ENCODE measurements at regions of chr7 and their contacts with region 1.

Region 1: DNA sequence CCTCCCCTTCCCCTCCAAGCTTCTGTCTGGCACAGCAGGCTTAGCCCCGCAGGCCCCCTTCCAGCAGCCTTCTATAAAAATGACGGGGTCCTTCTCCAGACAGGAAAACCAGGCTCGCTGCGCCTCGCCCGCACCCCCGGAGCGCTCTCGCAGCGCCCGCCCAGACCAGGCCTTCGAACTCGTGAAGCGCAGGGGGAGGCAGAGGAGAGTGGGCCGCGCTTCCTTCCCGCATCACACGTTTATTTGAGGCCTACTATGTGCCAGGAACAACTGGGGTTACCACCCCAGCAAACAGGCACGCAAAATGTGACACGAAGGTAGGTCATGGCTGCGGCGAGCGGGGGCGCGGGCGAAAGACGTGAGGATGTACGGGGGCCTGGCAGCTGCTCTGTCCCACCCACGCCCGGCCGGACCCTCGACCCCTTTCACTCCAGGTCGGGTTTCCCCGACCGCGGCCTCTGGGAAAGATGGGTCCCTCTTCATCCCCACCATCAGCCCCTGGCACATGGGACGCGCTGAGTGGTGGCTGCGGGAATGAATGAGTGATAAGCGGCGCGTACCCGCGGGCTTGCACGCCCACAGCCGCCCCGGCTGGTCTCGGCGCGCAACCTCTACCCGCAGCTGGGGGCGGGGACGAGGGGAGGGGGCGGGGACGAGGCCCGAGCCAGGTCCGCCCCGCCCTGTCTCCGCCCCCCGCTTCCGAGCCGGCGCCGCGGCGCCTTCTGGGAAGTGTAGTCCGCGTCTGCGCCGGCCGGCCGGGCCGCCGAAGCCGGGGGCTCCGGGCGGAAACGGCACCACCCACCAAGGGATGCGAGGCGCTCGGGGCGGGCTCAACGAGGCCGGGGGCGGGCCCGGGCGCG is 59.1 kb downstream of the ZNF467 start:
- DNase-seq: peak; percentile 88
- ATAC-seq: peak; percentile 91
- H3K4me3 Mint-ChIP-seq: peak overlapping the region; percentile 83
- H3K27ac Mint-ChIP-seq: no peak overlapping the region
- H3K4me1 Mint-ChIP-seq: peaks cover 17% of the 10 kb centered on the region
- H3K27me3 Mint-ChIP-seq: no peaks in the 10 kb centered on the region
- CTCF ChIP-seq: no peak

Region 2: DNA sequence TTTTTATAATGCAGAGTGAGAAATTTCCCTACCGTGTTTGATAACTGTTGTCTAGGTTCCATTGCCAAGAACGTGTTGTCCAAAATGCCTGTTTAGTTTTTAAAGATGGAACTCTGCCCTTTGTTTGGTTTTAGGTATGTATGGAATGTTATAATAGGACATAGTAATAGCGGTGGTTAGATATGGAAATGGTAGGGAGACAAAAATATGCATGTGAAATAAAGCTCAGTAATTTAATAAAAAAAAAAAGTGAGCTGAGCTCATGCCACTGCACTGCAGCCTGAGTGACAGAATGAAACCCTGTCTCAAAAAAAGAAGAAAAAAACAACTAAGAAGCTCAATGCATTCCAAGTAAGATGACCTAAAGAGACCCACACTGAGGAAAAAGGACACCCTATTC is 379.4 kb before region 1 on chr7:
- CTCF ChIA-PET with region 1: no interaction called
- POLR2A ChIA-PET with region 1: no interaction called
- intact Hi-C with region 1: no loop called
- DNase-seq: no peak
- ATAC-seq: no peak
- H3K4me3 Mint-ChIP-seq: no peak overlapping the region
- H3K27ac Mint-ChIP-seq: no peak overlapping the region
- H3K4me1 Mint-ChIP-seq: no peaks in the 10 kb centered on the region
- H3K27me3 Mint-ChIP-seq: peaks cover 13% of the 10 kb centered on the region
- CTCF ChIP-seq: no peak

Region 3: DNA sequence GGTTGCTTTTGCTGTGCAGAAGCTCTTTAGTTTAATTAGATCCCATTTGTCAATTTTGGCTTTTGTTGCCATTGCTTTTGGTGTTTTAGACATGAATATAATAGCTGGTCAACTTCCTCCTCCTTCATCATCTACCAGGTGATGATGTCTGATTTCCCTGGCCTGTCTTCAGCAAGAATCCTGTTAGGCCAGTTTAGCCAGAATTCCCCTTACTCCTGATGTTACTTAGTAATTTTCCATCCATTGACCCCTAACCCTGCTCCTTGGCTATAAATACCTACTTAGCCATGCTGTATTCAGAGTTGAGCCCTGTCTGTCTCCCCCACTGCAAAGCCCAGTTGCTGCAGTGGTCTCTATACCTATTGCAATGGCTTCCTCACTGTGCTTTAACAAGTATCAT is 344.8 kb before region 1 on chr7:
- CTCF ChIA-PET with region 1: no interaction called
- POLR2A ChIA-PET with region 1: no interaction called
- intact Hi-C with region 1: no loop called
- DNase-seq: no peak
- ATAC-seq: no peak
- H3K4me3 Mint-ChIP-seq: no peak overlapping the region
- H3K27ac Mint-ChIP-seq: no peak overlapping the region
- H3K4me1 Mint-ChIP-seq: no peaks in the 10 kb centered on the region
- H3K27me3 Mint-ChIP-seq: peaks cover 21% of the 10 kb centered on the region
- CTCF ChIP-seq: no peak

Region 4: GRCh38 chr7:149742075-149742701 is 27.9 kb after region 1 on chr7:
- CTCF ChIA-PET with region 1: interaction called, 8 read pairs
- POLR2A ChIA-PET with region 1: no interaction called
- intact Hi-C with region 1: loop called (anchors 2 kb)
- DNase-seq: peak; percentile 58
- ATAC-seq: peak; percentile 89
- H3K4me3 Mint-ChIP-seq: peak overlapping the region; percentile 76
- H3K27ac Mint-ChIP-seq: no peak overlapping the region
- H3K4me1 Mint-ChIP-seq: peaks cover 10% of the 10 kb centered on the region
- H3K27me3 Mint-ChIP-seq: peaks cover 26% of the 10 kb centered on the region
- CTCF ChIP-seq: peak; percentile 64

Region 5: DNA sequence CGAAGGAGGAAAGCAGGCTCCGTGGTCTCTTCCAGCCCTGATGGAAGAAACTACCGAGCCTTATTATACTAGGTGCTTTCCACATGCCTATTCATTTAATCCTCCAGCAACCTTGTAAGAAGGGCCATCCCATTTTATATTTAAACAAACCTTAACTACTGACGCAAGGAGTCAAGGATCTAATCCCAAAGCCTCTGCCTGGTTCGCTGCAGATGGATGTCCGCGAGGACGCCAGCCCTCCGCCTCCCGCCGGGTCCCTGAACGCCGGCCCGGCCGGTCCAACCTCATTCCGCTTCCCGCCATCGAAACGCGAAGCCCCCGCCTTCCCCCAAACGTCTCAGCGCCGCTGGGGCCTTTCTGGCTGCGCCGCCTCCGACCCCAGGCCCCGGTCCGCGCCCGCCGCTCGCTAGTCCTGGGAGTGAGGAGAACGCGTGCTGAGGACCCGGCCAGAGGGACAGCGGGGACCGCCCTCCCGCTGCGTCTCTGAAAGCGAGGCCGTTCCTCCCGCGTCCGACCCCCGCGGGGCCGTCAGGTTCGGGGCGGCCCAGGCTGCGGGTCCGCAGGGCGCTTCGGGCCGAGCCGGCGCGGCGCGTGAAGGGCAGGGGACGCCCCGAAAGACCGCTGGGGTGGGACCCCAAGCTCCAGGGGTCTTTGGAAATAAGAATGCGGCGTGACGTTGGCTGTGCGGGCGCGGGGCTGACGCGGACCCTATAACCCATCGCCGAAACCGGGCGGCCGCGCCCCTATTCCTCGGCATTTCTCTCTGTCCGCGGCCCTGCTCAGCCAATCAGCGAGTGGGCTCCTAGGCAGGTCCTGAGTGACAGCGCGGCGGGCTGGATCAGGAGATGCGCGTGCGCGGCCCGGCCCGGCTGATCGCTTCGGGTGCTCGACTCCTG is 159.0 kb after region 1 on chr7 and contains the start of gene ATP6V0E2:
- CTCF ChIA-PET with region 1: no interaction called
- POLR2A ChIA-PET with region 1: no interaction called
- intact Hi-C with region 1: loop called (anchors 1 kb)
- DNase-seq: peak; percentile 86
- ATAC-seq: peak; percentile 95
- H3K4me3 Mint-ChIP-seq: peak within 1 kb of the TSS; percentile 86
- H3K27ac Mint-ChIP-seq: peak within 1 kb of the TSS; percentile 53
- H3K4me1 Mint-ChIP-seq: peaks cover 42% of the 10 kb centered on the region
- H3K27me3 Mint-ChIP-seq: no peaks in the 10 kb centered on the region
- CTCF ChIP-seq: no peak
- total RNA-seq, gene ATP6V0E2: 9.1 and 10.4 TPM in 2 replicates

Region 6: DNA sequence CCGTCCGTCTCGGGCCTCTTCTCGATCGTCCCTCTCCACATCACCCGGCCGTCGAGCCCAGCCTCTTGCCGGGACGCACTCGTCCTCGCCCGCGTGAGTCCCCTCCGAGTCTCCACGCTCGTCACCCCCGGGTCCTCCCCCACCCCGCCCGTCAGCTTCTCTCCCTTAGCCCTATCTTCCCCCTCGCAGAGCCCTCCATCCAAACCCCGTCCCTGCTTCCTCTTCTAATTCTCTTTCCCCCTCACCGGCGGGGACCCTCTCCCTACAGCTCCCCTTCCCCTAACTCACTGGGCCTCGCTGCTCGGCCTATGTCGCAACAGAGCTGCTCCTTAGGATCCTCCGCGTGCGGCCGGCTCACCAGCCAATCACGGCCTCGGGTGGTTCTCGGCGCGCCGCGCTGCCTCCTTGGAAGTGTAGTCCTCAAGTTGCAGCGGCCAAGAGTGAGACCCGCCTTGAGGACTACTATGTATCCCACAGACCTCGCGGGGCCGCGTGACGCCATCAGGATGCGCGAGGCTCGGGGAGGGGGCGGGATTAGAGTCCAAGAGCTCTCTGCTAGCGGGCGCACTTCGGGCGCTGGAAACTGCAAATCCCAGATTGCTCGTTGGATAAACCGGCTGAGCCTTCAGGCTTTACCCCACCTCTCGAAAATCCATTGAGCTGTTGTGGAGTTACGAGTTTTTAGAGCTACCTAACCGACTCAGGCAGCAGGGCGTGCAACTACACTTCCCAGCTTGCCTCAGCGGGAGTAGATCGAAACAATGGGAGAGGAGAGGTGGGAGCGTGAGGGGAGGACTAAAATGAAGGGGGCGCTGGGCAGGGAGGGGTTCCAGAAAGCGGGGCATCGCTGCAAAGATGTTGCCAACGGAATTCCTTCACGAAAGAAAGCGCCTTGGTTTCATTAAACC is 1512.8 kb after region 1 on chr7 and contains the start of gene ABCF2:
- CTCF ChIA-PET with region 1: no interaction called
- POLR2A ChIA-PET with region 1: no interaction called
- intact Hi-C with region 1: loop called (anchors 10 kb)
- DNase-seq: peak; percentile 97
- ATAC-seq: peak; percentile 99
- H3K4me3 Mint-ChIP-seq: peak within 1 kb of the TSS; percentile 99
- H3K27ac Mint-ChIP-seq: peak within 1 kb of the TSS; percentile 91
- H3K4me1 Mint-ChIP-seq: peaks cover 41% of the 10 kb centered on the region
- H3K27me3 Mint-ChIP-seq: no peaks in the 10 kb centered on the region
- CTCF ChIP-seq: no peak
- total RNA-seq, gene ABCF2: 47.3 and 52.4 TPM in 2 replicates

Measured in activated B cell treated with CpG ODN at 0.5 μM for 24 hours (primary cell).